Colonic mucosa (tissue), 4 donors: ENCODE measurements at regions of chr5 and their contacts with region 1.

Region 1: GRCh38 chr5:36739751-36740221 is 133.4 kb downstream of the SLC1A3 start:
- DNase-seq: peak; percentile 89
- H3K4me3 ChIP-seq: no peak overlapping the region
- H3K27ac ChIP-seq: no peak overlapping the region
- H3K4me1 ChIP-seq: no peaks in the 10 kb centered on the region
- H3K27me3 ChIP-seq: no peaks in the 10 kb centered on the region
- CTCF ChIP-seq: peak; percentile 79

Region 2: DNA sequence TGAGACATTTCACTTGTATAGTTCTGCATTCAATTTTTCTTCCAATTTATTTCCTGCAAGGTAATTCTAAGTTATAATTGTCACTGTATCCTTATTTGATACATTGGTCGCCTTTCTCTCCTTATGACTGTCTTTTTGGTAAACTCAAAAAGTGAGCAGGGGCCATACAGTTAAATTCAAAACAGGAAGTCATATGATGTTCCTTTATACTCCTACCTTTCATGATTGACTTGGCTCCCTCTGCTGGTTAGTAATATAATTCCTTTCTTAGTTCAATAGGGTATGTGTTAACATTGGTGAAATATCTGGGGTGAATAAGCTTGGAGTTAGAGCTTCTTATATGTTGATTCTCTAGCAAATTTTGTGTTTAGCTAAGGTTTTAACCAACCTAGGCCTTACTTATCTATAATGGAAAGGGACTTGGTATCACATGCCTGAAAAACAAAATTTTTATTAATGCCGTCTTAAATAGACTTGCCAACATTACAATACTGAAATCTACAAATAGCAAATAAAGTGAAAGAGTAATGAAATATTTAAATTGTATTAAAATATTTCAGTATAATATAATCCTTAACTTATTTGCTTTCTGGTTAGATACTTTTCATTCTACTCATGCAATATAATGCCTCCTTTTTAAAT is 130.7 kb after region 1 on chr5:
- intact Hi-C with region 1: loop called (anchors 5 kb)
- DNase-seq: no peak
- H3K4me3 ChIP-seq: no peak overlapping the region
- H3K27ac ChIP-seq: no peak overlapping the region
- H3K4me1 ChIP-seq: no peaks in the 10 kb centered on the region
- H3K27me3 ChIP-seq: no peaks in the 10 kb centered on the region
- CTCF ChIP-seq: peak; percentile 51

Region 3: DNA sequence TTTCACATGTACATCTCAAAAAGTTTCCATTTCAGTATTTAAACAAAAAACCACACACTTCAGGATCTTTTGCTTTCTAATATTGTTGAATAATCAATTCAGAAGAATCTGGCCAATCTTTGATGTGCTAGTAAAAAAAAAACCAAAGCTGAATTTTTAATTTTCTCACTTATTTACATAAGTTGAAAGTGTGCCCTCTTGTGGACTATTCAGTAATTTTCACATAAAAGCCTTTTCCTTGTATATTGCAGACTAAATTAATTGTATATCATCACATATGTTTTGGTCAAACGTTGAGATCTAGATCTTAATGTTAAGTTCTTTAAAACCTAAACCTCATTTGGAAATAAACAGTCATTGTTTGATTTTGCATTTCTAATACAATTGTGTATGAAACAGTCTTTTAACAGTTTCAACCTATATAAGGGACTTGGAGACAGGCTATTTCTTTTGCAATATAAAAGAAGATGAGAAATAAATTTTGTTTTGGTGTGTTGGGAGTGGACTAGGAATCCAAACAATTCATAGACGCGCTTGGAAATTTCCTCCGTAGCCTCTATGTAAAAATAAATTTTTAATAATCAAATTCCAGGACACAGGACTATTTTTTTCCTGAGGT is 204.9 kb after region 1 on chr5:
- intact Hi-C with region 1: loop called (anchors 10 kb)
- DNase-seq: no peak
- H3K4me3 ChIP-seq: no peak overlapping the region
- H3K27ac ChIP-seq: no peak overlapping the region
- H3K4me1 ChIP-seq: no peaks in the 10 kb centered on the region
- H3K27me3 ChIP-seq: no peaks in the 10 kb centered on the region
- CTCF ChIP-seq: peak; percentile 50

Region 4: GRCh38 chr5:37071901-37072581 is 332.3 kb after region 1 on chr5:
- intact Hi-C with region 1: no loop called
- DNase-seq: no peak
- H3K4me3 ChIP-seq: no peak overlapping the region
- H3K27ac ChIP-seq: no peak overlapping the region
- H3K4me1 ChIP-seq: no peaks in the 10 kb centered on the region
- H3K27me3 ChIP-seq: no peaks in the 10 kb centered on the region
- CTCF ChIP-seq: no peak